HepG2 (cell line): ENCODE measurements at regions of chr12 and their contacts with region 1.

Region 1: GRCh38 chr12:2004113-2004929 is at the start of gene DCP1B:
- DNase-seq: peak; percentile 91
- ATAC-seq: peak; percentile 99
- H3K4me3 ChIP-seq: peak within 1 kb of the TSS; percentile 81 to 99 (median 93)
- H3K27ac ChIP-seq: peak within 1 kb of the TSS; percentile 90
- H3K4me1 ChIP-seq: peaks cover 49% of the 10 kb centered on the region
- H3K27me3 ChIP-seq: no peaks in the 10 kb centered on the region; a peak in 1 of 5 replicates
- CTCF ChIP-seq: peak; percentile 43
- EP300 ChIP-seq: 0 out of 4 replicates have a peak, but pooled peaks of 1 of the 2 experiments have one; percentile 18
- POLR2A ChIP-seq: peak; percentile 74 to 85
- RAD21 ChIP-seq: peak; percentile 32; the same call in 1 of the 2 replicates
- total RNA-seq, gene DCP1B: 11.4 and 12.4 TPM in 2 replicates

Region 2: DNA sequence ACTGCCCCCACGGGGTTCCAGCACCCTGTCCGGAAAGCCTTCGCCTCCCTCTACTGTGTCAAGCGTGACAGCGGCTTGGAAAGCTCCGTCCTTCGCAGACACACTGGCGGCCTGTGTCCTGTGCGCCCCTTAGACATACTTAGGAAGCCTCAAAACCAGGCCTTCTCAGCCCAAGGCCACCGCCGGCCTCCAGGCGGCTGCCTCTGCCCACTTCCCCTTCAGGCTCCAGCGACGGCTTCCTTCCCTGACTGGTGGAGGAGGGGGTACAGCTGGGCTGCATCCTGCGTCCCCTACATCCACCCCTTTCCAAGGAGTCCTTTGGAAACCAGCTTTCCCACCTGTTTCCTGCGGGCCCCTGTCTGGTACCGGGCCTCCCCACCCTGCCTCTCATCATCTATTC is 83.3 kb before region 1 on chr12:
- CTCF ChIA-PET with region 1: no interaction called
- POLR2A ChIA-PET with region 1: no interaction called
- in situ Hi-C with region 1: no loop called
- intact Hi-C with region 1: no loop called
- DNase-seq: no peak
- ATAC-seq: no peak
- H3K4me3 ChIP-seq: no peak overlapping the region
- H3K27ac ChIP-seq: no peak overlapping the region
- H3K4me1 ChIP-seq: peaks cover 18% of the 10 kb centered on the region; the same call in 1 of the 2 replicates
- H3K27me3 ChIP-seq: peaks cover 10 to 38% of the 10 kb centered on the region in 2 experiments
- CTCF ChIP-seq: no peak
- EP300 ChIP-seq: no peak
- POLR2A ChIP-seq: no peak
- RAD21 ChIP-seq: no peak

Region 3: DNA sequence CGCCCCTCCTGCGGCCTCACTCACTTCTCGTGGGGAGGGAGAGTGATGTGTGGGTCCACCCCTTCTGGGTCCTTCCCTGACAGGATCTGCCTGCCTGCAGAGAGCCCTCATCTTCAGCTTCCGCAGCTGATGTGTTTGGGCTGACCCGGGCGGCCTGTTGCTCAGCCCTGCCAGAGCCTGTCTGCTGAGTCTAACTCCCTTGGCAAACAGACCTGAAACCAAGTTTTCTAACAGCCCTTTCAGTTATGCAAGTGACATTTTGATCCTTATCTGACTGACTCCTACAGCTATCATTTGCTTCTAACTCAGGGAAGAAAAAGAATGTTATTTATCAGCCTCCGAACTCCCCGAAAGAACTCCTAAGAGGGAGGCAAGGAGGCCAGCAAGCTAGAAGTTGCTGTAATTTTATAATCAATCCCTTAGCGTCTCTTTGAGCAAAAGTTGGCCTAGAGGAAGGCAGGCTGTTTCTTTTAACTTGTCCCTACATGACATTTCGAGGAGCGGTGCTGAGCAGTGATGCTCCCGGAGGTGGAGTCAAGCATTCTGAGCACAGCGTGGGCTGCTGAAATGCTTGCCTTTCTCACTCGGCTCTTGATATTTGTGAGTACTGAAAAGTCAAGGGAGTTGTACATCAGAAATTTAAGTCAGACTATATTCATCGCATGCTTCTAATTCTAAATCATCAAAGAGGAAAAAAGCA is 54.4 kb before region 1 on chr12:
- CTCF ChIA-PET with region 1: no interaction called
- POLR2A ChIA-PET with region 1: no interaction called
- in situ Hi-C with region 1: no loop called
- intact Hi-C with region 1: loop called (anchors 10 kb)
- DNase-seq: no peak
- ATAC-seq: peak; percentile 24; the same call in 2 of the 3 replicates
- H3K4me3 ChIP-seq: no peak overlapping the region
- H3K27ac ChIP-seq: no peak overlapping the region
- H3K4me1 ChIP-seq: 0 out of 2 replicates have a peak, but pooled peaks cover 8% of the 10 kb centered on the region
- H3K27me3 ChIP-seq: no peaks in the 10 kb centered on the region
- CTCF ChIP-seq: no peak
- EP300 ChIP-seq: no peak
- POLR2A ChIP-seq: no peak
- RAD21 ChIP-seq: no peak

Region 4: GRCh38 chr12:1993341-1993740 is 11.0 kb before region 1 on chr12:
- CTCF ChIA-PET with region 1: no interaction called
- POLR2A ChIA-PET with region 1: interaction called, 48 read pairs
- in situ Hi-C with region 1: no loop called
- intact Hi-C with region 1: no loop called
- DNase-seq: peak; percentile 29
- ATAC-seq: no peak
- H3K4me3 ChIP-seq: peak overlapping the region in 1 of 3 experiments; percentile 41; a peak in 1 of 6 replicates
- H3K27ac ChIP-seq: peak overlapping the region; percentile 89
- H3K4me1 ChIP-seq: peaks cover 53% of the 10 kb centered on the region
- H3K27me3 ChIP-seq: no peaks in the 10 kb centered on the region
- CTCF ChIP-seq: no peak
- EP300 ChIP-seq: no peak
- POLR2A ChIP-seq: no peak
- RAD21 ChIP-seq: no peak